Heart left ventricle (tissue), 16 donors: ENCODE measurements at regions of chr16 and their contacts with region 1.

Region 1: DNA sequence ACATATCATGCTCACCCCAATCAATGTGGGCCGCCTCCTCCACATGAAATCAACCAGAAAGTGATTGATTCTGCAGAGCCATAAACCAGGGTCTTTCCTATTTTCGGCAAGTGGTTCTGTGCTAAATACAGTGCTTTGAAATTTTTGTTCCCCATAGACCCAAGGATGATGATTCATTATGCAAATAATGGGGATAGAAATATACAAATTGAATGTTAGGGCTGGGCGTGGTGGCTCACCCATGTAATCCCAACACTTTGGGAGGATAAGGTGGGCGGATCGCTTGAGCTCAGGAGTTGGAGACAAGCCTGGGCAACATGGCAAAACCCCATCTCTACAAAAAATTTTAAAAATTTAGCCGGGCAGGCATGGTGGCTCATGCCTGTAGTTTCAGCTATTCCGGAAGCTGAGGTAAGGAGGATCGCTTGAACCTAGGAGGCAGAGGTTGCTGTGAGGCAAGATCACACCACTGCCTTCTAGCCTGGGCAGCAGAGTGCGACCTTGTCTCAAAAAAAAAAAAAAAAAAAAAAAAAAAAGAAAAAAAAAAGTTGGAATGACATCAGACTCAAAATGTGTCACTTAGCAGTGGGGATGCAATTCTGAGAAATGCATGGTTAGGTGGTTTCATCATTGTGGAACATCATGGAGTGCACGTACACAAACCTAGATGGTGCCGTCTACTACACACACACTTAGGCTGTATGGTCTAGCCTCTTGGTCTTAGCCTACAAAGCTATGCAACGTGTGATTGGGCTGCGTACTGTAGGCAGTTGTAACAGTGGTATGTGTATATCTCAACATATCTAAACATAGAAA is 581.7 kb downstream of the MAF start:
- DNase-seq: no peak
- ATAC-seq: no peak
- H3K4me3 ChIP-seq: no peak overlapping the region
- H3K27ac ChIP-seq: no peak overlapping the region
- H3K4me1 ChIP-seq: no peaks in the 10 kb centered on the region
- H3K27me3 ChIP-seq: no peaks in the 10 kb centered on the region
- CTCF ChIP-seq: no peak
- POLR2A ChIP-seq: no peak

Region 2: GRCh38 chr16:78538919-78539318 is 479.9 kb before region 1 on chr16:
- intact Hi-C with region 1: loop called in 1 of 10 experiments (anchors 5 kb)
- DNase-seq: no peak
- ATAC-seq: no peak
- H3K4me3 ChIP-seq: no peak overlapping the region
- H3K27ac ChIP-seq: no peak overlapping the region
- H3K4me1 ChIP-seq: no peaks in the 10 kb centered on the region
- H3K27me3 ChIP-seq: no peaks in the 10 kb centered on the region
- CTCF ChIP-seq: no peak
- POLR2A ChIP-seq: no peak